A549 (cell line): ENCODE measurements at regions of chr12 and their contacts with region 1.

Region 1: DNA sequence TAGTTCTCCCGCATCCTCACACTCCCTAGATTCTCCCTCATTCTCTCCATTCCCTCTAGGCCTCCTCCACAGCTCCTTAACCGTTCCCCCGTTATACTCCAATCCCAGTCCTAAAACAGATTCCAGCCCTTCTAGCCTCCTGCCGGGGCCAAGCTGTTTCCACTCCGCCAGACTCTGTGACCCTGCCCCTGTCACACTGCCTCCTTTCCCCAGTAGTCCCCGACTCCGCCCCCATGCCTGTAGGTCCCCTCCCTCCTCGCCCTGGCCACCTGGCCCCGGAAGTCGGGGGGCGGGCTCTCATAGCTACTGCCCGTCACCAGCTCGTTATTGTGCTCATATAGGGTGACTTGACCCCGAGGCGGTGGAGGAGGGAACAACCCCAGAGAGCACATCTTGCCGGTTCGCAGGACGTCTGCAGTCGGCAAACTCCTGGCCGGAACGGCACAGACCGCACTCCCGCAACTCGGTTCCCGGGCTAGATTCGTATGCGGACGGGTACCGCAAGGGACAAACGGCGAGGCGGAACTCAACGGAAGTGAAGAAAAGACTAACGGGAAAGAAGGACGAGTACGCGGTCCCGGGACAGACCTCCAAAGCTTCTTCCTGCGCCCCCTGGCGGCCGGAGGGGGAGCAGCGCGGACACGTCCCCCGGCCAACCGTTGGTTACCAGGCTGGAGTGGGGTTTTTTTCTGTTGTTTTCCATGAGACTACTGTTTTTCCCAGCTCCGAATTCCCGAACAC is at the start of gene AAAS:
- DNase-seq: peak; percentile 97 to 100
- ATAC-seq: peak; percentile 90
- H3K4me3 ChIP-seq: peak within 1 kb of the TSS; percentile 60
- H3K27ac ChIP-seq: peak within 1 kb of the TSS; percentile 96 to 98
- H3K4me1 ChIP-seq: peaks cover 24% of the 10 kb centered on the region
- CTCF ChIP-seq: peak; percentile 95
- EP300 ChIP-seq: no peak
- POLR2A ChIP-seq: peak; percentile 72
- RAD21 ChIP-seq: peak in 1 of 2 experiments; percentile 29; a peak in 2 of 5 replicates
- polyA plus RNA-seq, gene AAAS: 82.6 and 104 TPM in 2 replicates

Region 2: DNA sequence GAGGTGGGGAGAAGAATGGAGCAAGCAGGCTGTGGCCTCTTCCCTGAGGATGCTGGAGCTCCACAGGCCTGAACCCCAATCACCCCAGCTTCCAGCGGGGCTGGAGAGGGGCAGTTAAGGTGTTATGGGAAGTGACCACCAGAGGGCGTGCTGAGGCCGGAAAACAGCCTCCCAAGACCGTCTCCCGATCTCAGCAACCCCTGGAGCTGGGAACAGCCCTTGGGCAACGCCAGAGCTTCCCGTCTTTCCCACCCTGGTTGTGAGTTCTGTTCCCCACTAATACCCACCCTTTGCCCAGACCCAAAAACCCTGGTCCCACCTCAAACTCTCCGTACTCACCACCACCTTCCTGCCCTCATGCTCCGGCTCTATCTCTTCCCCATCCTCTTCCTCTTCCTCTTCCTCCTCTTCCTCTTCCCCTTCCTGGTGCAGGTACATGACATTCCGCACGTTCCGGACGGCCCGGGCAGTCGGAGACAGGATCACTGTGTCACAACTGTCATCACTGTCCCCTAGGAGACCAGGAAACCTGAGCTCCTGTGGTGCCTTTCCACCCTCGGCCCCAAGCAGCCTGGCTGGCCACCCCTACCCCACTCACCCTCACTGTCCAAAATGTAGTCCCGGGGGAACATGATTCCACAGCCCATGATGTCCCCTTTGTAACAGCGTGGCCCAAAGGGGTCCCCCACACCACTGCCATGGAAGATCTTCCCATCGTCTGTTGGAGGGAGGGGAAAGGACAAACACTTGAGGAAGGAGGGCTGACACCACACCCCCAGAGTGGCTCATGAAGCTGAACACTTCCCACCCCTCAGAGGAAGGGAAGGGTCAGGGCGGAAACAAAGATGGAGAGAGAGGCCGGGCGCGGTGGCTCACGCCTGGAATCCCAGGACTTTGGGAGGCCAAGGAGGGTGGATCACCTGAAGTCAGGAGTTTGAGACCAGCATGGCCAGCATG is 255.0 kb before region 1 on chr12:
- CTCF ChIA-PET with region 1: interaction called, 13 read pairs
- POLR2A ChIA-PET with region 1: no interaction called
- DNase-seq: peak; percentile 80 to 96
- ATAC-seq: peak; percentile 56 to 84
- H3K4me3 ChIP-seq: no peak overlapping the region
- H3K27ac ChIP-seq: peak overlapping the region; percentile 65 to 87
- H3K4me1 ChIP-seq: peaks cover 36% of the 10 kb centered on the region
- CTCF ChIP-seq: peak; percentile 96
- EP300 ChIP-seq: no peak
- POLR2A ChIP-seq: no peak
- RAD21 ChIP-seq: peak; percentile 95 to 98

Region 3: DNA sequence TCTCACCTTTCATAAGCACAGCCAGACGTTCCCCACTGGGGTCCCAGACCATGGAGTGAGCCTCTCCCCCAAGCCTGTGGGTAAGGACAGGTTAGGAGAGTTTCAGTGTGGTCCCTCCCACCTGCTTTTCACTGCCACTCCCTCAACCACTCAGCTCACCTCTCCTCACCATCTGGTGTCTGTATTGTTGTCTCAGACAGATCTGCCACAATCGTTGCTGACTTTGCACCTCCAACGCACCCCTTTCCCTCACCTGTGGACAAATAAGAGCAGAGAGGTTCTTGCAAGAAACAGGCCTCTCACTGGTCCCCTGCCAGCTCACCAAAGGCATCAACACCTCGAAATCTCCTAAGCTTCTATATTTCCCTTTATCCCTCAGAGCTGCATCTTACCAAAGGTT is 13.0 kb before region 1 on chr12:
- CTCF ChIA-PET with region 1: interaction called, 54 read pairs
- POLR2A ChIA-PET with region 1: interaction called, 10 read pairs
- DNase-seq: no peak
- ATAC-seq: peak in 1 of 2 experiments; percentile 11; a peak in 2 of 6 replicates
- H3K4me3 ChIP-seq: no peak overlapping the region
- H3K27ac ChIP-seq: no peak overlapping the region
- H3K4me1 ChIP-seq: 0 out of 3 replicates have a peak, but pooled peaks cover 2% of the 10 kb centered on the region
- CTCF ChIP-seq: no peak
- EP300 ChIP-seq: no peak
- POLR2A ChIP-seq: no peak
- RAD21 ChIP-seq: no peak

Region 4: DNA sequence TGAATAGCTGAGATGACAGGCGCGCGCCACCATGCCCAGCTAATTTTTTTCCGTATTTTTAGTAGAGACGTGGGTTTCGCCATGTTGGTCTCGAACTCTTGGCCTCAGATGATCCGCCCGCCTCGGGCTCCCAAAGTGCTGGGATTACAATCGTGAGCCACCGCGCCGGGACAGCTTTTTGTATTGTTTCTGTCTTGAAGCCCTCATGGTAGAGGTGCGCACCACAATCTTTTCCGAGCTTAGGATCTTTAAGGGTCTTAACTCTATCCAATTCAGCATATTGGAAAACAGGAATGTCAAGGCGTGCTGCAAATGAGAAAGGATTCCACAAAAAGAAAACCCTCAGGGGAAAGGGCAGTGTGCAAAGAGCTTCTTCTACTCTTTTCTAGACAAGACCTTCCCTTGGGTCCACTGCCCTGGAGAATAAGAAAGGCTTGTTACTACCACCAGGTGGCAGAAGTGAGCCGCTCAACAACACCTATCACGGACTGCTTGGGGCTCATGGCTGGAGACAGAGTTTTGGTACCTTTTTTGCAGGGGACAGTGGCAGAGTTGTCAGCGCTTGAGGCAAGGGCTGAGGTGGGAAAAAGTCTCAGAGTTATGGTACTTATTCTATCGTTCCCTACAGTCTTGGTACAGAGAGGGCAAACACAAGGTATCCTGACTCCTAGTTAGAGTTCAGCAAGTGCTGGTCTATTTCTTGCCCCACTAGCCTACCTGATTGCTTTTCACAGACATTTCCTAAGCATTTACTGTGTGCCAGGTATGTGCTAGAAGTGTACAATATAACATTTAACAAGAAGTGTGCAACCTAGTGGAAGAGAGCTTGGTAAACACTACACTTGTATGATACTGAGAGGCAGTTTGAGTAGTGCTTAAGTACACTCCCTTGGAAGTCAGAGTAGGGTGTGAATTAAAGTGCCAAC is 31.4 kb after region 1 on chr12:
- CTCF ChIA-PET with region 1: interaction called, 638 read pairs
- POLR2A ChIA-PET with region 1: interaction called, 5 read pairs
- DNase-seq: peak; percentile 66 to 93
- ATAC-seq: peak; percentile 99 to 100
- H3K4me3 ChIP-seq: no peak overlapping the region
- H3K27ac ChIP-seq: peak overlapping the region; percentile 29 to 63
- H3K4me1 ChIP-seq: peaks cover 6% of the 10 kb centered on the region
- CTCF ChIP-seq: peak; percentile 94
- EP300 ChIP-seq: no peak
- POLR2A ChIP-seq: no peak
- RAD21 ChIP-seq: peak; percentile 97 to 99

Region 5: DNA sequence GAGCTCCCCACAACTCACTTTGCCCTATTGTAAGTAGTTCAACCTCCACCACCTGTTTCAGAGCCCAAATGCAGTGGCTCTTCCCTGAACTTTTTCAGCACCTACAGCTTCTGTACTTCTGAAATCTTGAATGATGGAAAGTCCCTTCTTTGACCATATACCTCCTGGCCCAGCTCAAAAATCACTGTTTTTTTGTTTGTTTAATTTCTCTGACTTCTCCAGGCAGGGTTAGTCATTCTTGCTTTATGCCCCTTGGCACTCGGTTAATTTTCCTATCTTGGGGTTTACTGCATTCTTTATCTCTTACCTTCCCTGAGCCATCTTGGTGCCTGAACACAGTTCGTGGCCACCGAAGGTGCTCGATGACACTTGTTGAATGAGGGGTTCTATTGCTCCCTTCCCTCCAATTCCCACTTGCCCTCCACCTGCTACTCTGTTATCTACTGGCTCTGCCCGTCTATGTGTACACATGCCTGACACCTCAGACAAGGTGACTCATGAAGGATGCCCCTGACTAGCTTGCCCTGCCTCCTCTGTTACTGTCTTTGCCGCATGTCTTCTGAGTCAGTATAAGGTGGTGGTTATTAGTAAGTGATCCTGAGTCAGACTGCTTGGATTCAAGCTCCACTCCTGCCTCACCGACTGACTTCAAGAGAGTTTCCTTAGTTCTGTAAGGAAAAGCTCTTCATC is 106.8 kb after region 1 on chr12:
- CTCF ChIA-PET with region 1: interaction called, 137 read pairs
- POLR2A ChIA-PET with region 1: interaction called, 3 read pairs
- DNase-seq: peak; percentile 89 to 91
- ATAC-seq: peak; percentile 94 to 96
- H3K4me3 ChIP-seq: no peak overlapping the region
- H3K27ac ChIP-seq: peak overlapping the region; percentile 71 to 85
- H3K4me1 ChIP-seq: peaks cover 45% of the 10 kb centered on the region
- CTCF ChIP-seq: no peak
- EP300 ChIP-seq: no peak
- POLR2A ChIP-seq: no peak
- RAD21 ChIP-seq: 0 out of 5 replicates have a peak, but pooled peaks of 1 of the 2 experiments have one; percentile 12

Region 6: DNA sequence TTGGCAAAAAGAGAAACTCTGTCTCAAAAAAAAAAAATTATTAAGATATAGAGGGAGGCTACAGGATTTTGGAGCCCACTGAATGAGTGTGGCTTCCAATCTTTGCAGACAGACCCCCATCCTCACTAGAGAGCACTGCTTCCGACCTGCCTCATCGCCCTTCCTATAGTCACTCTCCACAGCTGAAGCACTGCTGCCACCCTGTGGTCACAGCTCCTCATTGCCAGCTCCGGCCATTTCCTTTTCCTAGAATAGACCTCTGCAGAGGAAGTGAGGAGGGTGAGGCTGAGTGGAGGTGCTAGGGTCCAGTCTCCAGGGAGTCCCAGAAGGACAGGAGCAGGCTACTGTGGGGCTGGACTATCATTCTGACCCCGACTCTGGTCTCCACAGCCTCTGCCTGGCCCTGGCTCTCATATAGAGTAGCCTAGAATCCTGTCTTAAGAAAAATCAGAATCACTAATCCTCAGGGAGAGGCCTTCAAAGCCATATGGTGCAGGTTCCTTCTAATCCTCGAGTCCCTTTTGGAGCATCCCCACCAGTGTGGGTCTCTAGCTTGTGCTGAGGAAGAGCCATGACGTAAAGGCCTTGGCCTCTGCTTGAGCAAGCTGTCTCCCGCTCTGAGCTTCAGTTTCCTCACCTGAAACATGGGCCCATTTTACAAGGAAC is 187.4 kb after region 1 on chr12:
- CTCF ChIA-PET with region 1: interaction called, 169 read pairs
- POLR2A ChIA-PET with region 1: interaction called, 4 read pairs
- DNase-seq: peak; percentile 77 to 85
- ATAC-seq: peak; percentile 85 to 93
- H3K4me3 ChIP-seq: no peak overlapping the region
- H3K27ac ChIP-seq: peak overlapping the region in 1 of 2 experiments; percentile 42; a peak in 1 of 6 replicates
- H3K4me1 ChIP-seq: peaks cover 9% of the 10 kb centered on the region
- CTCF ChIP-seq: peak; percentile 91
- EP300 ChIP-seq: no peak
- POLR2A ChIP-seq: no peak
- RAD21 ChIP-seq: peak; percentile 91 to 98